ENCODE measurements at regions of chr5 and their contacts with region 1.

Region 1: GRCh38 chr5:80093796-80094195 is 58.6 kb downstream of the THBS4 start:
- DNase-seq: no peak
- H3K4me3 ChIP-seq: no peak overlapping the region
- H3K27ac ChIP-seq: peak overlapping the region in 1 of 4 donors; percentile 42
- H3K4me1 ChIP-seq: peaks cover 0 to 14% (median 2%) of the 10 kb centered on the region in 4 donors
- H3K27me3 ChIP-seq: no peaks in the 10 kb centered on the region
- CTCF ChIP-seq: no peak
- EP300 ChIP-seq: no peak
- POLR2A ChIP-seq: no peak

Region 2: DNA sequence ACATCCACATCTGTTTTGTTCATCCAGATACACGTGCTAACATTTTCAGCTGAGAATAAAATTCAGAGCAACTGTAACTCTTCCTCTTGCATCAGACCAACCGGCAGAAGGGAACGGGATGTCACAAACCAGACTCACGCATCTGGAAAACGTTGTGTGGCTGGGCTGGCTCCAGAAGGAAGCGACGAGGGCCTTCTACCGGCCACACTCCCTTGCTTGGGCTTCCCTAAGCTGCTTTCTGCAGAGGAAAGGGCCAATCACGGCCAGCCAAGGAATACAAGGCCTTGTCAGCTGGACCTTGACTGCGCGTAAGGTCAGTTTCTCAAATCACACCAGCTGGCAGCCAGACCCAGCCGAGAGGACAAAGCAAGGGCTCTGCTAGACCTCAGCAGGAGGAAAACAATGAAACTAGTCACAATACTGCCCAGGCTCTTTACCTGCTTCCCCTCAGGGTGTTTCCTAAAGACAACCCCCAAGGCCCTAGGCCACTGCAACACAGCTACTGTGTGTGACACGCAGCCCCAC is 47.4 kb after region 1 on chr5:
- intact Hi-C with region 1: loop called (anchors 5 kb)
- DNase-seq: peak; percentile 98
- H3K4me3 ChIP-seq: no peak overlapping the region
- H3K27ac ChIP-seq: peak overlapping the region; percentile 69 to 91 (median 88)
- H3K4me1 ChIP-seq: peaks cover 0 to 38% (median 29%) of the 10 kb centered on the region in 4 donors
- H3K27me3 ChIP-seq: no peaks in the 10 kb centered on the region
- CTCF ChIP-seq: no peak
- EP300 ChIP-seq: peak; percentile 18 to 87 (median 46)
- POLR2A ChIP-seq: no peak

Region 3: DNA sequence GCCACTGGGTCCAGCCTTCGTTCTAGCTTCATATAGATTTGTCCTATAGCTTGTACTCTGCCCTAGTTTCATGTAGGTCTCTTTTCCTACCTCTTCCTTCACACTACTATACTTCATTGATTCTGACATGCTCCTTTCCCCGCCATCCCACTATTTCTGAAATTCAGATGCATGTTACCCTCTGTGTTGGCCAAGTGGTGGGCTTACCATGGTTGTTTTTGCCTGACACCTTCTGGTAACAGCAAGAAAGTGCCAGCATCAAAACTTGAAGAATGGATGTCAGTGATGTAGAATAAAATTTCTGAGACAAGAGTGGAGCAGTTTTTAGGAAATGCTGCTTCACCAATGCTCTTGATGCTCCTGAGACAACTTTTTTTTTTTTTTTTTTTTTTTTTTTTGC is 181.6 kb after region 1 on chr5:
- intact Hi-C with region 1: loop called (anchors 2 kb)
- DNase-seq: no peak
- H3K4me3 ChIP-seq: no peak overlapping the region
- H3K27ac ChIP-seq: no peak overlapping the region
- H3K4me1 ChIP-seq: peaks cover 0 to 12% (median 5%) of the 10 kb centered on the region in 4 donors
- H3K27me3 ChIP-seq: no peaks in the 10 kb centered on the region
- CTCF ChIP-seq: peak in 1 of 4 experiments; percentile 24
- EP300 ChIP-seq: no peak
- POLR2A ChIP-seq: no peak

Region 4: GRCh38 chr5:80308526-80308925 is 214.7 kb after region 1 on chr5:
- intact Hi-C with region 1: loop called (anchors 1 kb)
- DNase-seq: no peak
- H3K4me3 ChIP-seq: no peak overlapping the region
- H3K27ac ChIP-seq: no peak overlapping the region
- H3K4me1 ChIP-seq: no peaks in the 10 kb centered on the region
- H3K27me3 ChIP-seq: no peaks in the 10 kb centered on the region
- CTCF ChIP-seq: no peak
- EP300 ChIP-seq: no peak
- POLR2A ChIP-seq: no peak

Measured in sigmoid colon (tissue), 7 donors.